Activated T-helper 1 cell treated with anti-CD3 and anti-CD28 coated beads, Interleukin-12 subunit alpha, Interleukin-12 subunit beta, Interleukin-2, Interleukin-4 antibody, amounts not matched to agents 30 ng/mL and 10 ng/mL and 1 ng/mL, durations not matched to agents 14 hours and 24 hours and 36 hours (primary cell): ENCODE measurements at regions of chr7 and their contacts with region 1.

Region 1: GRCh38 chr7:87506246-87507180 is 31.0 kb upstream of the ABCB4 start:
- DNase-seq: no peak
- H3K4me3 Mint-ChIP-seq: no peak overlapping the region
- H3K27ac Mint-ChIP-seq: no peak overlapping the region
- H3K4me1 Mint-ChIP-seq: peaks cover 27% of the 10 kb centered on the region
- H3K27me3 Mint-ChIP-seq: no peaks in the 10 kb centered on the region

Region 2: GRCh38 chr7:87886875-87887274 is 380.4 kb after region 1 on chr7:
- intact Hi-C with region 1: loop called (anchors 1 kb)
- DNase-seq: no peak
- H3K4me3 Mint-ChIP-seq: no peak overlapping the region
- H3K27ac Mint-ChIP-seq: no peak overlapping the region
- H3K4me1 Mint-ChIP-seq: peaks cover 24% of the 10 kb centered on the region
- H3K27me3 Mint-ChIP-seq: no peaks in the 10 kb centered on the region

Region 3: DNA sequence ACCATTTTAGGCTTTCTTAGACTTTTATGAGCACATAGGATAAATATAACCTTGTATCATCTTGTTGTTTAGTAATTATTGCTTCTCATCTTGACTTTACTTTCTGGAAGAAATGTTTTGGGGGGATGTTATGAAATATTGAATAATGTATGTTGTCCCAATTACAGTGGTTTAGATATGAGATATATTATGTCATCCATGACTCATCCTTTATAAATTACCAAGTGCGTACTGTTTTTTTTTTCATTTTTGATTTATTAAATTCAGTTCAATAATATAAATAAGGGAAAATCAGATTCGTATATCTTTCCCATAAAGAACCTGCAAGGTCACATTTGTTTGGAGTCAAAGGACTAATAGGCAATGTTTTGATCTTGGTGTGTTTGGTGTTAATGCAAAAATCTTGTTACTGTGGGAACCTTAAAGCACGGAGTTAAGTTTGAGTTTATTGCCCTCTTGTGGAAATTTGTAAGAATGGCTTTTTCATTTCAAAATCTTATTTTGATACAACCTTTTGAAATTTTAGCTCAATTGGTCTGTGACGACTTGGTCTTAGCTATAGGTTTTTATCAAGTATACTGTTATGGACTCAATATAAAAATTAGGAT is 604.7 kb after region 1 on chr7:
- intact Hi-C with region 1: loop called (anchors 5 kb)
- DNase-seq: no peak
- H3K4me3 Mint-ChIP-seq: no peak overlapping the region
- H3K27ac Mint-ChIP-seq: no peak overlapping the region
- H3K4me1 Mint-ChIP-seq: peaks cover 4% of the 10 kb centered on the region
- H3K27me3 Mint-ChIP-seq: no peaks in the 10 kb centered on the region

Region 4: GRCh38 chr7:88169717-88170320 is 663.3 kb after region 1 on chr7:
- intact Hi-C with region 1: loop called (anchors 10 kb)
- DNase-seq: no peak
- H3K4me3 Mint-ChIP-seq: no peak overlapping the region
- H3K27ac Mint-ChIP-seq: no peak overlapping the region
- H3K4me1 Mint-ChIP-seq: no peaks in the 10 kb centered on the region
- H3K27me3 Mint-ChIP-seq: peaks cover 4% of the 10 kb centered on the region